Thyroid gland (tissue), 4 donors: ENCODE measurements at regions of chr7 and their contacts with region 1.

Region 1: DNA sequence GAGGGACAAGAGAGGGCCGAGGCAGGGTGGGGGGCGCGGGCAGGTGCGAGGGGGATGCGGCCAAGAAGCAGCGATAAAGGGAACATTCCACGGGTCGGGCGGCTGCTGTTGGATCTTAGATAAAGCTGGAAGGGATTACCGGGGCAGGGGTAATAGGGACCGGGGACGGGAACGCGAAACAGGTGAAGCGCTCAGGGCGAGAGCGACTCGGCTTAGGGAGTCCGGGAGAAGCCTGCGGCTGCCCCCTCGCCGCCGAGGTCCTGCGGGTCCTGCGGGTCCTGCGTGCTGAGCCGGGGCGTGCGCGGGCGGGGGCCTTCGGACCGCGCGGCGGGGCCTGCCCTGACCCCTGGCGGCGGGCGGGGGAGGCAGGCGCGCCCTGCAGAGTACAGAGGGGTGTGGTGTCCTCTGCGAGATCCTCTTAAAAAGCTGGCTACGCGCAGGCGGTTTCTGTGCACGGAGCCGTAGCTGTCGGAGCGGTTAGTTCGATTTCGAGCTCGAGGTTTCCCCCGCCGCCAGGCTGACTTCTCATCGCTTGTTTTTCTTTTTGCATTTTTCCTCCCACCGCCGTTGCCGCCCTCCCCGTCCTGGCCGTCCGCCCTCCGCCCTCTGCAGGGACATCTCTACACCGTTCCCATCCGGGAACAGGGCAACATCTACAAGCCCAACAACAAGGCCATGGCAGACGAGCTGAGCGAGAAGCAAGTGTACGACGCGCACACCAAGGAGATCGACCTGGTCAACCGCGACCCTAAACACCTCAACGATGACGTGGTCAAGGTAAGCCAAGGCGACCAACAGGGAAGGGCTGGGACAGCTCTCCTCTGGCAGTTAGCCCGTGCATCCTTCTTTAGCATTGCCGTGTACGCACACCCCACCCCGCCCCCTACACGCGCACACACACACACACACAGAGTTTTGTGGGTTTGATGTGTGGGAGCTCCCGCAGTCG is 1.4 kb downstream of the CAV1 start:
- DNase-seq: peak; percentile 89 to 92
- H3K4me3 ChIP-seq: peak overlapping the region; percentile 65 to 95 (median 69)
- H3K27ac ChIP-seq: peak overlapping the region; percentile 96 to 99 (median 97)
- H3K4me1 ChIP-seq: peaks cover 33 to 49% of the 10 kb centered on the region in 2 donors
- H3K27me3 ChIP-seq: no peaks in the 10 kb centered on the region
- CTCF ChIP-seq: peak; percentile 42 to 95 (median 87)
- POLR2A ChIP-seq: peak; percentile 60 to 87

Region 2: DNA sequence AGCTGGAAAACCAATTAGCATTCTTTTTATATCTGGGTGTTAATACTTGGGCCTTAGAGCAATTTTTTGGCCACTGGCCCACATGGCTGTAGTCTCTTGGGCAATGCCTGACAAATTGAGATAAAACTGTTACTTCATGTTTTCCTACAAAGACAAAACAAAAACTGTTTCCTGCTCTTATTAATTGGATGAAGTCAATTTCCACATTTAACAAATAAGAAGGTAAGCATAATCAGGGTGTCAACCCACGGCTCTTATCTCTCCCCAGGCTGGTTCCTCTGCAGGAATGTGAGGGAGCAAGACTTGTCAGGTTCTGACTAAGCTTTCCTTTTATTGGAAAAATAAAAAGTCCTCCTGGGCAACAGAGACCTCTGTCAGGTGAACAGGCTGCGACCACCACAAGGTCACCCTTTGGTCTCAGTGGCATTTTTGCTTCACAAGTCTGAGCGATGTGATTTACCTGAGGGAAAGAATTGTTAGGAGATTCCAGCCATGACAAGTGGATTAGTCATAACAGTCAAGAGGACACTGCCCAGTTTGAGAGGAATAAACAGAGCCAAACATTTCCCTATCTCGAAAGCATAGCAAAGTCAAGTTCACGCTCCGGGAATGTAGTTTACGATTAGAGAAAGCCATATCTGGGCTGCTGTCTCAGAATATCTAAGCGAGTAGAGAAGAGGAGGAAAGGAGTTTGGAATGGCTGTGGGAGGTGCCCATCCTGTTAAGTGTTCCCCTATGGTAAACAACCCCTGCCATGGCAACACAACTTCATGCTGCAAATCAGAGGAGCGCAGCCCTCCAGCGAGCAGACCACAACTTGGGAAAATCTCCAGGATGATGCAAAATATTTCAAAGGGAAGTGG is 171.4 kb before region 1 on chr7:
- intact Hi-C with region 1: loop called (anchors 10 kb)
- DNase-seq: peak; percentile 67 to 75
- H3K4me3 ChIP-seq: no peak overlapping the region
- H3K27ac ChIP-seq: peak overlapping the region; percentile 93 to 97 (median 96)
- H3K4me1 ChIP-seq: peaks cover 56% of the 10 kb centered on the region in 2 donors
- H3K27me3 ChIP-seq: no peaks in the 10 kb centered on the region
- CTCF ChIP-seq: no peak
- POLR2A ChIP-seq: peak in 1 of 2 donors; percentile 56